ENCODE measurements at regions of chr11 and their contacts with region 1.

Region 1: GRCh38 chr11:85682330-85683305 is 3.4 kb downstream of the CCDC89 start:
- DNase-seq: peak; percentile 22 to 75 (median 46)
- ATAC-seq: peak; percentile 76
- H3K4me3 ChIP-seq: peak overlapping the region; percentile 69
- H3K4me3 Mint-ChIP-seq: peak overlapping the region; percentile 86
- H3K27ac ChIP-seq: no peak overlapping the region
- H3K27ac Mint-ChIP-seq: no peak overlapping the region
- H3K4me1 ChIP-seq: peaks cover 12% of the 10 kb centered on the region
- H3K4me1 Mint-ChIP-seq: peaks cover 11% of the 10 kb centered on the region
- H3K27me3 ChIP-seq: peaks cover 0 to 5% of the 10 kb centered on the region in 2 experiments
- H3K27me3 Mint-ChIP-seq: no peaks in the 10 kb centered on the region
- CTCF ChIP-seq: no peak

Region 2: DNA sequence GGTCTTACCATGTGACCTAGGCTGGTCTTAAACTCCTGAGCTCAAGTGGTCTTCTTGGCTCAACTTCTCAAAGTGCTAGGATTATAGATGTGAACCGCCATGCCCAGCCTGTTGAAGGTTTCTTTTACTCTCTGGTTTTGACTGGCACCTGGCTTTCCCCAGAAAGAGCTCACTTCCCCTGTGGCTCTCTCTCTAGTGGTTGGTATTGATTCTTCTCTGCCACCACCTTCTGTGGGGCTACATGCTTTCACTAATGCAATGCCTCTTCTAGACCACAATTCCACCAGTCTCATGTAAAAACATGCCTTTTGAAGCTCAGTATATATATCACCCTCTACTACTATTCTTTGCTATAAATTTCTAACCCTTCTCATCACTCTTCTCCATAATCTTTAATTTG is 239.7 kb after region 1 on chr11:
- CTCF ChIA-PET with region 1: no interaction called
- POLR2A ChIA-PET with region 1: no interaction called
- intact Hi-C with region 1: no loop called
- DNase-seq: no peak
- ATAC-seq: no peak
- H3K4me3 ChIP-seq: no peak overlapping the region
- H3K4me3 Mint-ChIP-seq: no peak overlapping the region
- H3K27ac ChIP-seq: no peak overlapping the region
- H3K27ac Mint-ChIP-seq: no peak overlapping the region
- H3K4me1 ChIP-seq: no peaks in the 10 kb centered on the region
- H3K4me1 Mint-ChIP-seq: no peaks in the 10 kb centered on the region
- H3K27me3 ChIP-seq: peaks cover 0 to 3% of the 10 kb centered on the region in 2 experiments
- H3K27me3 Mint-ChIP-seq: peaks cover 30% of the 10 kb centered on the region
- CTCF ChIP-seq: no peak

Region 3: DNA sequence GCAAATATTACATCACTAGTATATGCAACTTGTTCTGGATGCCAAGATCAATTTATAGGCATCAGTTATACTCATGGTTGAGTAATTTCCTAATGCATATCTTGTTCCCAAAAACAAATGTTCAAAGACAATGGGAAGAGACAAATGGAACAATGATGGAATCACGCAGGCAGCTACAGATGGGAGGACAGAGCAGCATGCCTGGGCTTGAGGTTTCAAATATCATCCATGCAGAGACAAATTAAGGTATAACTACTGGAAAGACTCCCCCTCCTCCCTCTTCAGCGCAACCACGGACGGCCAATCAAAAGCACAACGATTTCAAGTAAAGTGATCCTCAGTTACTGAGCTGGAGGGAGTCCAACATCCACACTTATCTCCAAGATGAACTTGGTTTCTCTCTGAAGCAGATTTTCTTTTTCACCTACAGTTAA is 279.3 kb after region 1 on chr11:
- CTCF ChIA-PET with region 1: no interaction called
- POLR2A ChIA-PET with region 1: no interaction called
- intact Hi-C with region 1: loop called in 1 of 2 experiments (anchors 10 kb)
- DNase-seq: no peak
- ATAC-seq: no peak
- H3K4me3 ChIP-seq: no peak overlapping the region
- H3K4me3 Mint-ChIP-seq: no peak overlapping the region
- H3K27ac ChIP-seq: no peak overlapping the region
- H3K27ac Mint-ChIP-seq: no peak overlapping the region
- H3K4me1 ChIP-seq: no peaks in the 10 kb centered on the region
- H3K4me1 Mint-ChIP-seq: no peaks in the 10 kb centered on the region
- H3K27me3 ChIP-seq: no peaks in the 10 kb centered on the region
- H3K27me3 Mint-ChIP-seq: no peaks in the 10 kb centered on the region
- CTCF ChIP-seq: no peak

Measured in CD4-positive, alpha-beta T cell (primary cell).